ENCODE measurements at regions of chr7 and their contacts with region 1.

Region 1: DNA sequence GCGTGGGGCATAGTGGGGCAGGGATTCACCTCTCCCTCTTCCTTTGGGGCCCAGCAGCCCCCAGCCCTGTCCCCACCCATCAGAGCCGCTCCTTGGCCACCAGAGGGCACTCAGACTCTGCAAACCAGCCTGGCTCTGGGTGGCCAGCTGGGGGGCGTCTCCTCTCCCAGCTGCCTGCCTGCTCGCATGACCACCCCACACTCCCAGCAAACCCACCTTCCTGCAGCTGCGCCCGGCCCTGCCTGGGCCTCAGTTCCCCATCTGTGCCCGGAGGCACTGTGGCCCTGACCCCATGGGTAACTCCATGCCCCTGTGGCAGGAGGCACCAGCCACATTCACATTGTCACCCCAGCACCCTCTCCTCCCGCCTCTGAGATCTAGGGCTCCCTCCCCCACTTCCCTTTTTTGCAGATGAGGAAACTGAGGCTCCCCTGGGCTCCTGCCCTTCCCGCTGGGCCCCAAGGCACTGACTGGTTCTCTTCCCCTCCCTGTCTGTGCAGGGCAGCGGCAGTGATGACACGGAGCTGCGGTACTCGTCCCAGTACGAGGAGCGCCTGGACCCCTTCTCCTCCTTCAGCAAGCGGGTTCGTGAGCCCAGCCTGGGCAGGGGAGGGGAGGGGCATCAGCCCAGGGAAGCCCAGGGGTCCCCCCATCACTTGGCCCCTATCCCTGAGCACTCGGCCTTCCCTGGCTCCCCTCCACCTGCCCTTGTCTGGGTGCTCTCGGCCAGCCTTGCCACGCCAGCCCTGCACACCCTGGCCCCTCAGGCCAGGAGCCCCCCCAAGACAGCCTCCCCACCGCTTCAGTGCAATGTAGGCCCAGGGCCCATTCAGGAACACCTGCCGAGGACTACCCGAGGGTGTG is 6.9 kb upstream of the SH2B2 start:
- DNase-seq: peak; percentile 50
- H3K4me3 ChIP-seq: no peak overlapping the region
- H3K27ac ChIP-seq: no peak overlapping the region
- H3K4me1 ChIP-seq: peaks cover 0 to 4% (median 0%) of the 10 kb centered on the region in 4 donors
- H3K27me3 ChIP-seq: no peaks in the 10 kb centered on the region
- CTCF ChIP-seq: peak; percentile 71 to 77 (median 75)
- EP300 ChIP-seq: no peak
- POLR2A ChIP-seq: no peak

Region 2: DNA sequence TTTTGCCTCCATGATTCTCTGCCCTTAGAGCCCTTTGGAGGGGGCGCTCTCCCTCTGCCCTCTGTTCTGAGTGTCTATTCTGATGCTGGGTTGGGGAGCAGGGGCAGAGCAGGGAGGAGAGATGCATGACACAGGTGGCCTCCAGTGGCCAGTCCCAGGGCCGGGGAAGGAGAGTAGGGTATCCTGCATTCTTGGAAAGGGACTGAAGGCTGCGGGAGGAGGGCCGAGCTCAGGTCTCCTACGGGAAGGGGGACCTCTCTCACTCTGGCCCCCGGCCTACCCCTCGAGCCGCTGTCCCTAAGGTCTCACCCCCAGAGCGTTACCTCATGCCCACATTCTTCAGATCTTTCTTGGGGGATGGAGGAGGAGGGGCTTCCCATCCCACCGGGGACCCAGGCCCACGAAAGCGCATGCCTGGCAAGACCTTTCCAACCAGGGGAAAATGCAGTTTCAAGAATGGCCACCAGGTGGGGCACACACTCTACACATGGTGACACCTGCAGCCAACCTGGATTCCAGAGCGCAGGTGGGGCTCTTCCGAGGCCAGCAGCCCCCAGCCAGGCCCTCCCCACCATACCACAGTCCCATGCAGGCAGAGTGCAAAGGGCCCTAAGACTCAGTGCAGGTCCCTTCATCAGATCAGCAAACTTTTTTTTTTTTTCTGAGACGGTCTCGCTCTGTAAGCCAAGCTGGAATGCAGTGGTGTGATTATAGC is 737.1 kb before region 1 on chr7:
- in situ Hi-C with region 1: loop called (anchors 5 to 10 kb)
- intact Hi-C with region 1: loop called (anchors 5 kb)
- DNase-seq: peak; percentile 79
- H3K4me3 ChIP-seq: no peak overlapping the region
- H3K27ac ChIP-seq: no peak overlapping the region
- H3K4me1 ChIP-seq: peaks cover 0 to 4% (median 0%) of the 10 kb centered on the region in 4 donors
- H3K27me3 ChIP-seq: no peaks in the 10 kb centered on the region
- CTCF ChIP-seq: peak; percentile 92 to 94 (median 94)
- EP300 ChIP-seq: no peak
- POLR2A ChIP-seq: no peak

Region 3: GRCh38 chr7:101882595-101883564 is 396.9 kb before region 1 on chr7:
- in situ Hi-C with region 1: no loop called
- intact Hi-C with region 1: no loop called
- DNase-seq: peak; percentile 85
- H3K4me3 ChIP-seq: no peak overlapping the region
- H3K27ac ChIP-seq: peak overlapping the region; percentile 87 to 90 (median 88)
- H3K4me1 ChIP-seq: peaks cover 53 to 82% (median 62%) of the 10 kb centered on the region in 4 donors
- H3K27me3 ChIP-seq: no peaks in the 10 kb centered on the region
- CTCF ChIP-seq: no peak
- EP300 ChIP-seq: peak; percentile 8
- POLR2A ChIP-seq: no peak

Region 4: GRCh38 chr7:102390697-102391484 is 111.1 kb after region 1 on chr7:
- in situ Hi-C with region 1: loop called (anchors 5 to 10 kb)
- intact Hi-C with region 1: loop called (anchors 2 kb)
- DNase-seq: peak; percentile 90
- H3K4me3 ChIP-seq: no peak overlapping the region
- H3K27ac ChIP-seq: no peak overlapping the region
- H3K4me1 ChIP-seq: peaks cover 0 to 8% (median 6%) of the 10 kb centered on the region in 4 donors
- H3K27me3 ChIP-seq: no peaks in the 10 kb centered on the region
- CTCF ChIP-seq: peak; percentile 91 to 93 (median 92)
- EP300 ChIP-seq: no peak
- POLR2A ChIP-seq: no peak

Region 5: GRCh38 chr7:102396027-102397019 is 116.6 kb after region 1 on chr7 and contains the start of gene PRKRIP1:
- in situ Hi-C with region 1: loop called (anchors 5 to 10 kb)
- intact Hi-C with region 1: loop called (anchors 2 kb)
- DNase-seq: peak; percentile 89
- H3K4me3 ChIP-seq: peak within 1 kb of the TSS; percentile 78 to 97 (median 84)
- H3K27ac ChIP-seq: peak within 1 kb of the TSS; percentile 79 to 95 (median 85)
- H3K4me1 ChIP-seq: peaks cover 4 to 20% (median 14%) of the 10 kb centered on the region in 4 donors
- H3K27me3 ChIP-seq: no peaks in the 10 kb centered on the region
- CTCF ChIP-seq: no peak
- EP300 ChIP-seq: no peak
- POLR2A ChIP-seq: peak; percentile 68
- total RNA-seq, gene PRKRIP1: 24.8 to 97.3 (median 33.6) TPM

Measured in transverse colon (tissue), 4 donors.